ENCODE measurements at regions of chr3 and their contacts with region 1.

Region 1: DNA sequence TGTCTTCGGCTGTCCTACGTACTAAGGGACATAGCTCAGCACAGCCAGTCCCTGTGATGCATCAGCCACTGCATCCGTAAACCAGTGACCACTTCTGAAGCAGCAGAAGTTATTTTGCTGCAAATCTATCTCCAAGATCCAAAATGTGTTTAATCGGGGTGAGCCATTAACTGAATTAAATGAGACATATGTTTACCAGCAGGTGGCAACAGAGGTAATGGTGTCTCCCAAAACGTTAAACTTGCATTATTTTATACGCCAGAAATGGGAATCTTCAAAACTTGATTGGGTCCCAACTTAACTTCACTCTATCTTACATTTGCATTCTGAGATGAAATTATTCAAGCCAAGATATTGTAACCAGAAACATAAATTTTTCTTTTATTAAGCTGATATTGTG is 75.3 kb upstream of the BOC start:
- DNase-seq: no peak
- H3K4me3 ChIP-seq: no peak overlapping the region
- CTCF ChIP-seq: peak in 2 of 3 donors; percentile 15 to 53
- POLR2A ChIP-seq: no peak

Region 2: DNA sequence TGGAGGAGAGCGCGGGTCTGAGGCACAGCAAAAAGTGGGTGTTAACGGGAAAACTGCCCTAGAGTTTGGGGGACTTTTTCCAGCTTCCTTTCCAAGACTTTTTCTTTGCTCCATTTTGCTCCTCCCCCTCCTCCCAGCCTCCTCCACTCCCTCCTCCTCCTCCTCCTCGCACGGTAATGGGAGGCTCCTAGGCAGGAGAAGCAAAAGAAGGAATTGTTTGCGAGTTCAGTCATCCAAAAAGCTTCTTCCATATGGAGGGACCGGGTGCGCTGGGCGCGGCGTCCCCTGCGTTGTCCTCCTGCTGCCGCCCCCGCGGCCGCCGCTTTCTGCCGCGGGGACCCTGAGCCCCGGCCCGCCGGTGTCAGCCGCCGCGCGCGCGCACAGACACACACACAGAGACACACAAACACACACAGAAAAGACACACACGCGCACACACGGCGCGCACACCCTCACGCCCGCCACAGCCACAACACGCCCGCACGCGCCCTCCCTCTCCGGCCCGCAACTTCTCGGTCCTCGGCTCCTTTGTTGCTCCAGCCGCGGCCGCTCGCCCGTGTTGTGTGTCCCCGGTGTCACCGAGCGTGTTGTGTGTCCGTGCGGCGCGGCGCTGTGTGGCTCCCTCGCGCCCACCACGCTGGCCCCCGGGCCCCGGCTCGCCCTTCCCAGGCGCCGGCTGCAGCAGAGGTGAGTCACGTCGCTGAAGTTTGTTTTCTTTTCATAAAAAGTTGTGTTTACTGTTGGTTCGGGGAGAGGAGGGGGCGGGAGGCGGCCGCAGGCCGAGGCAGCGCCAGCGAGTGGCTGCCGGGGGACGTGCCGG is 75.5 kb after region 1 on chr3 and contains the start of gene BOC:
- intact Hi-C with region 1: loop called (anchors 10 kb)
- DNase-seq: peak in 1 of 2 donors; percentile 88
- H3K4me3 ChIP-seq: peak within 1 kb of the TSS; percentile 70
- CTCF ChIP-seq: no peak
- POLR2A ChIP-seq: no peak
- total RNA-seq, gene BOC: 61.3 to 75.3 (median 68.0) TPM

Region 3: DNA sequence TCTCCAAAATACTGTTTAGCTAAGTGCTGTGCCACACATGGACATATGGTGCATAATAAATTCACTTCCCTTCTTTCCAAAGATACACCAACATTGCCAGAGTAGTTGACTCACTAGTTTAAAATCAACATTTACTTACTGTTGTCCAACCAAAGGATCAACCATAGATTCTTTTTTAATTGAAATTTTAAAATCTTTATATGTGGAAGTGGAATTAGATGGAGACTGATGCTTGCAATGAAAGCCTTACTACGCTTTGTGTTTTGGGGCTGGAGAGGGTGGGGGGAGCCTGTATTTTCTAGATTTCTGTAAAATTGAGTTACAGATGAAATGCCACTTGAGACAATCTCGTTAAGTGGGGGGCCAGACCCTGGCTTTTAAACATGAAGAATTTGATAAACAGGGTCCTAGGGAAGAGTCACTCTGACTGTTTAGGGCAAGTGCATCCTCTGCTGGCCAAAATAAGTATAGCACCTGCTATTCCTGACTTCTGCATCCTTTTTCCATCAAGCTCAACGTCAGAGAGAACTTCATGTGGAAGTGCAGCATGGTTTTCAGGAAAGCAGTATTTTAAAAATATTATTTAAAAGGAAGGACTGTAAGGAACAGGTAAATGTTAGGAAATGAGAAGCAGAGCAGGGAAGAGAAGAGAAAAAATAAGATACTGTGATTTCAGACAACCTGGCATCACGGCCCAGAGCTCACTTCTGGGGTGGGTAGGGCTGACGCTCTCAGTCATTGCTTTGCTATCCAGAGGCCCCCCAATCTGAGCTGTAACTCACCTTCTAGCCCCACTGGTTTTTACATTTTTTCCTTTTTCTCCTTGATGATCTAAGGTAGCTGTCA is 152.0 kb after region 1 on chr3:
- intact Hi-C with region 1: loop called (anchors 5 kb)
- DNase-seq: peak in 1 of 2 donors; percentile 82
- H3K4me3 ChIP-seq: no peak overlapping the region
- CTCF ChIP-seq: peak in 2 of 3 donors; percentile 88 to 99
- POLR2A ChIP-seq: no peak

Measured in lower leg skin (tissue), 4 donors.